Colonic mucosa (tissue), 4 donors: ENCODE measurements at regions of chr11 and their contacts with region 1.

Region 1: GRCh38 chr11:44036811-44037657 is 10.7 kb upstream of the ACCSL start:
- DNase-seq: peak; percentile 59
- H3K4me3 ChIP-seq: no peak overlapping the region
- H3K27ac ChIP-seq: no peak overlapping the region
- H3K4me1 ChIP-seq: no peaks in the 10 kb centered on the region
- H3K27me3 ChIP-seq: no peaks in the 10 kb centered on the region
- CTCF ChIP-seq: peak; percentile 65

Region 2: DNA sequence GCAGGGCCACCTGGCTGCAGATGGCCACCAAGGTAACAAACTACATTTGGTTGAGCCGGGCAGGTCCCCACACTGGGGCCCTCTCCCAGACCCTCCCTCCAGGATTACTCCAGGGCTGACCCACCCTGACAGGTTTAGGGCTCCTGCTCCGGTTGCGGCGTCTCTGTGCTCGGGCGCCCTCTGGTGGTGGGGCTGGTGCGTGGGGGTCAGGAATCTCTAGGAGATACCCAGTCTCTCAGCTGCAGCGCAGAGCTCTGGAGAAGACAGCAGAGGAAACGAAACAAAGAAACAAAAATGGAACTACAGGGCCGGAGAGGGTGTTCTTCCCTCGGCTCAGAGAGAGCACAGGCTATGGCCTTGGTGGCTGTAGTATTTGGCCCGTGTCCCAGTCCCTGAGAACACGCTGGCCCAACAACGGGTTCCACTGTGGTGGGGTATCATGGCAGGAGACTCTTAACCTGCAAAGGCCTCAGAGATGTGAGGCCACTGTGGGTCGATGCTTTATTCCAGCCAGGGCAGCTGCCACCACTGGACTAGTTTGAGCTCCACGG is 92.2 kb before region 1 on chr11:
- intact Hi-C with region 1: loop called (anchors 5 kb)
- DNase-seq: peak; percentile 85
- H3K4me3 ChIP-seq: peak overlapping the region; percentile 47
- H3K27ac ChIP-seq: peak overlapping the region; percentile 52
- H3K4me1 ChIP-seq: no peaks in the 10 kb centered on the region
- H3K27me3 ChIP-seq: peaks cover 40% of the 10 kb centered on the region
- CTCF ChIP-seq: peak; percentile 63

Region 3: GRCh38 chr11:44094260-44094868 is 57.3 kb after region 1 on chr11:
- intact Hi-C with region 1: no loop called
- DNase-seq: peak; percentile 89
- H3K4me3 ChIP-seq: no peak overlapping the region
- H3K27ac ChIP-seq: no peak overlapping the region
- H3K4me1 ChIP-seq: peaks cover 7% of the 10 kb centered on the region
- H3K27me3 ChIP-seq: no peaks in the 10 kb centered on the region
- CTCF ChIP-seq: peak; percentile 77

Region 4: DNA sequence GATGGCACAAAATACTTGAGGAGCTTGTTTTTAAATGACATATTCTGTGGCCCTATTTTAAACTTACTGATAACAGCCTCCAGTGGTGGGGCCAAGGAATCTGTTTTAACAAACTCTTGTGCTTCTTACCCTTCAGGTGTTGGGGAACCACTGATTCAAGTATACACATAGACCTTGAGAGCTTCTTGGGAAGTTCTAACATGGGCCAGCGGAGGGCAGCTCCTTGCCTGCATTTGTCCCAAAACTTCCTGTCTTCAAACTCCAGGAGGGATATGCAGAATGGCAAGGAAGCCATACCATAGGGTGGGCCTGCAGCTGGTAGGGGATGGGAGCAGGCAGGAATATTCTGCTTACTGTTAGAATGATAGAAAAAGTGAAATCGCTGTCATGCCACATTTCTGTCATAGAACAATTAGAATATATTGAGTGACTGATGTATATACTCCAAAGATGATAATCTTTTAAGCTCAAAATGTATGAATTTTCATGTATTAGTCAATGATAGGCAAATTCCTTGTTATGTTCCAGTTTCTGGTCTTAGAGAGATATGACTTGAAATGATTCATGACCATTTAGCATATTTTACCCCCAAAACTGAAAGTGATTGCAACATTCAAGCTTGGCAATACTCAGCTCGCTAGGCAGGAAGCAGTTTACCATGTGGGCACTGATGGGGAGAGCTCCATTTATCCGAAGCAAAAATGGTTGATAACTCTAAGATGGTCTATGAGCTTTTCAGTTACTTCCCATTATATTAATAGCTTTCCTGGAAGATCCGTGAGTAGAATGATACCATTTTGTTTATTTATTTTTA is 67.7 kb after region 1 on chr11:
- intact Hi-C with region 1: no loop called
- DNase-seq: no peak
- H3K4me3 ChIP-seq: no peak overlapping the region
- H3K27ac ChIP-seq: no peak overlapping the region
- H3K4me1 ChIP-seq: no peaks in the 10 kb centered on the region
- H3K27me3 ChIP-seq: no peaks in the 10 kb centered on the region
- CTCF ChIP-seq: no peak